IMR-90 (cell line): ENCODE measurements at regions of chr15 and their contacts with region 1.

Region 1: GRCh38 chr15:49620658-49621368 is at the starts of genes DTWD1 and FAM227B:
- DNase-seq: peak; percentile 98
- ATAC-seq: peak; percentile 98
- H3K4me3 ChIP-seq: peak within 1 kb of the TSS; percentile 77
- H3K27ac ChIP-seq: peak within 1 kb of the TSS; percentile 95
- H3K4me1 ChIP-seq: peaks cover 3% of the 10 kb centered on the region; the same call in 1 of the 2 replicates
- H3K27me3 ChIP-seq: no peaks in the 10 kb centered on the region
- CTCF ChIP-seq: no peak
- POLR2A ChIP-seq: peak; percentile 92
- RAD21 ChIP-seq: peak; percentile 32
- total RNA-seq, gene DTWD1: 20.1 and 24.4 TPM in 2 replicates
- total RNA-seq, gene FAM227B: 1.8 and 2.5 TPM in 2 replicates

Region 2: DNA sequence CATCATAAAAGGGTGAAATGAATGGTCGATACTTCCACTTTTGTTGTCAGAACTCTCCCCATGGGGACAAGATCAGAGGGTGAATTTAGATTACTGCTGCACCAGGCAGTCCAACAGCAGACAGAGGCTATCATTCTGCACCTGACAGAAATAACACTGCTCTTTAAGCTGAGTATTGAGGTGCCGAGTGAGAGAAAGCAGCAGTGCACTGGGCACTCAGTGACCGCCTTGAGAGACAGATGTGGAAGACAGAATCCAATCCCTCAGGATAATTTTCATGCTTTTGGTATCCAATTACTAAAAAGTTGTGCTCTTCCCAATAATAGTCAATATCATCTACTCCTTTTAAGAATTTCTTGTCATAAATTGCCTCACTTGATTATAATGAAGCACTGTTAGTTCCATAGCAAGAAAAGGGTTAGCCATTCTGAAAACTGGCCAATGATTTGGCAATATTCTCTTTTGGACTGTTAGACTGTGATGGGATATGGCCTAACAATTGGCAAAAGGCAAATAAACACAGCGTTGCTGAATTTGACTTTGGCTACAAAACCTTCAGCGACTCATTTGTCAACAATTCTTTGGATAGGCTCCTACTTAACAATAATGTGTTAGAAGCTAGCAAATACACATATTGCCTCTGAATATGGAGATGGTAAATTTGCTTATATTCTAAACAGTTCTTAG is 192.3 kb before region 1 on chr15:
- CTCF ChIA-PET with region 1: no interaction called
- POLR2A ChIA-PET with region 1: no interaction called
- dilution Hi-C with region 1: no loop called
- in situ Hi-C with region 1: no loop called
- intact Hi-C with region 1: loop called (anchors 2 kb)
- DNase-seq: peak; percentile 64
- ATAC-seq: peak; percentile 19
- H3K4me3 ChIP-seq: peak overlapping the region; percentile 23
- H3K27ac ChIP-seq: peak overlapping the region; percentile 78
- H3K4me1 ChIP-seq: peaks cover 14% of the 10 kb centered on the region
- H3K27me3 ChIP-seq: no peaks in the 10 kb centered on the region
- CTCF ChIP-seq: no peak
- POLR2A ChIP-seq: no peak
- RAD21 ChIP-seq: no peak

Region 3: GRCh38 chr15:49832511-49832910 is 211.7 kb after region 1 on chr15:
- CTCF ChIA-PET with region 1: no interaction called
- POLR2A ChIA-PET with region 1: no interaction called
- dilution Hi-C with region 1: no loop called
- in situ Hi-C with region 1: no loop called
- intact Hi-C with region 1: loop called (anchors 5 kb)
- DNase-seq: no peak
- ATAC-seq: 0 out of 2 replicates have a peak, but pooled peaks have one; percentile 21
- H3K4me3 ChIP-seq: no peak overlapping the region
- H3K27ac ChIP-seq: 0 out of 2 replicates have a peak overlapping the region, but pooled peaks have one; percentile 3
- H3K4me1 ChIP-seq: peaks cover 8% of the 10 kb centered on the region
- H3K27me3 ChIP-seq: no peaks in the 10 kb centered on the region
- CTCF ChIP-seq: peak; percentile 31
- POLR2A ChIP-seq: no peak
- RAD21 ChIP-seq: 0 out of 2 replicates have a peak, but pooled peaks have one; percentile 18

Region 4: GRCh38 chr15:49901996-49902684 is 281.3 kb after region 1 on chr15:
- CTCF ChIA-PET with region 1: interaction called, 3 read pairs
- POLR2A ChIA-PET with region 1: interaction called, 4 read pairs
- dilution Hi-C with region 1: no loop called
- in situ Hi-C with region 1: no loop called
- intact Hi-C with region 1: loop called (anchors 1 kb)
- DNase-seq: peak; percentile 65
- ATAC-seq: peak; percentile 65
- H3K4me3 ChIP-seq: no peak overlapping the region
- H3K27ac ChIP-seq: peak overlapping the region; percentile 98
- H3K4me1 ChIP-seq: peaks cover 24% of the 10 kb centered on the region
- H3K27me3 ChIP-seq: no peaks in the 10 kb centered on the region
- CTCF ChIP-seq: peak; percentile 66
- POLR2A ChIP-seq: no peak
- RAD21 ChIP-seq: peak; percentile 65

Region 5: DNA sequence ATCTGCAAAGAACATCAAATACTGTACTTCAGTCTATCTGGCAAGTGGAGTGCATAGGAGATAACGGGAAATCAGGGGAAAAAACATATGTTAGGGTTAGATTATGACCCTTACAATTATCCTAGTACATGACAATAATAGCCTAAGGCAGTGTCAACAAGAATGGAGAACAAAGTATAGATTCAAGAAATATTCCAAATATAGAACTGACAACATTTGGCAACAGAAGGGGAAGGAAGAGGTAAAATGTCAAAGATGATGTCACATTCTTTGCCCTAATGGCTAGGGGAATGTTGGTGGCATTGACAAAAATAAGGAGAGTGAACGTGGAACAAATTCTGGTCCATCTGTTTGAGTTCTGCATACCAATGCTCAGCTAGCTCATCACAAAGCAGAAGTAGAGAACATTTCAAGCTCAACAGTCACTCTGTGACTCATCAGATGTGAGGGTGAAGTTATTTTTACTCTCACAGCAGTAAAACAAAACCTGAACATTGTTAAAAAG is 513.8 kb after region 1 on chr15:
- CTCF ChIA-PET with region 1: no interaction called
- POLR2A ChIA-PET with region 1: no interaction called
- dilution Hi-C with region 1: no loop called
- in situ Hi-C with region 1: no loop called
- intact Hi-C with region 1: loop called (anchors 5 kb)
- DNase-seq: peak; percentile 89
- ATAC-seq: peak; percentile 44
- H3K4me3 ChIP-seq: no peak overlapping the region
- H3K27ac ChIP-seq: peak overlapping the region; percentile 60
- H3K4me1 ChIP-seq: peaks cover 17% of the 10 kb centered on the region
- H3K27me3 ChIP-seq: no peaks in the 10 kb centered on the region
- CTCF ChIP-seq: no peak
- POLR2A ChIP-seq: no peak
- RAD21 ChIP-seq: no peak